Mucosa of descending colon (tissue), 3 donors: ENCODE measurements at regions of chr2 and their contacts with region 1.

Region 1: DNA sequence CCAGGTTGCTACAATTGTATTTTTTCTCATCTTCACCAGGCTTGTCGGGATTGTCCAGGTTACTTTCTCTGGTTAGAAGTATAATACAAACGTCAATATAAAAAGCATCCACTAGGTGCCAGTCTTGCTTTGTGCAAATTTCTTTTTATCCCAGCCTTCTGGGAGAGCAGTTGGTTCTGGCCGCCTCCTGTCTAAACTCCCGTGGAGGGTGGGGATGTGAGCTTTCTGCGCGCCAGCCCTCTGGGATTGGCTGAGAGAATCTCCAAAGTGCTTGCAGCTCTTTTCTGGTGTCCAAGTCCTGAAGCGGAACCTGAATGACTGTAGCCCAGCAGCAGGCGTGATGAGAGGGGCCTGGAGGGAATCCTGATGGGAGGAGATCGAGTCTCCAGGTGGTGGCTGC is 22.4 kb upstream of the TOGARAM2 start:
- DNase-seq: peak in 2 of 3 donors; percentile 39 to 69
- ATAC-seq: peak; percentile 88
- H3K4me3 ChIP-seq: no peak overlapping the region
- H3K4me1 ChIP-seq: peaks cover 9% of the 10 kb centered on the region
- CTCF ChIP-seq: peak; percentile 35

Region 2: DNA sequence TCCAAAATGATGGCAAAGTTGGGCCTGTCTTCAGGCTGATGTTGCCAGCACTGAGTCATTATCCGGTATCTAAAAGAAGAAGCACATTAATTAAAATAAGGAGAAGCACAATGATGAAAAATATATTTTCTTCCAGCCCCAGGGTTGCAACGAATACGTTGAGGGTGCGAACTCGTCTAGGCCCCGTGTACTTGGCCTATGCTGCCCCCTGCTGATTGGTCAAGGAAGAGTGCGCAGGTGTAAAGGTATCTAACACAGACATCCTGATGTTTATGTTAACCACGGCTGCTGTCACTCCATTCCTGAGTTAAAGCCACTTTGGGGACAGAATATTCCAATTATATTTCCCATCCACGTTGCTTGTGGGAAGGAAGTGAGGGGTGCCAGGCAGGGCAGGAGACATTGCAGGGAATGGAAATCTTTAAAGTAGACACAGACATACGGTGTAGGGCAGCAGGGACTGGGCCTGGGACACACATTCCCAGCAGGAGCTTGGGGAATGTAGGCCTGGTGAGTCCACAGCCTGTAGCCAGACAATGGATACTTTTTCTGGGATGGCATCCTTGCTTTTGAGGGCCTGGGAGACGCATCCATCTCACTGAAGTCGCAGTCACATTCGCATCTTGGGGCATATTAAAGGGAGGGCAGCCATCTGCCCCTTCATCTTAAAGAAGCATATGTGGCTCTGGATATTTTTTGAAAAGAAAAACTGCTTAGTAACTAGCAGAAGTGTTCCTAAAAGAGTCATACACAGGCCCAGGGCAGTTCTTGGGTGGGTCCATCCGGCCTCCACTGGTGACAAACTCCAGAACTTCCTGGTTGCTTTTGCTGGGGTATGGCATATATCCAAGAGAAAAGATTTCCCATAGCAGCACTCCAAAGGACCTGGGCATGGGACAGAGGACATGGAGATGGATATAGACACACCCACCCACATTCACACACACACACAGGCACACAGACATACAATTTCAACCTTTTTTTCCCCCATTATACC is 238.4 kb after region 1 on chr2:
- intact Hi-C with region 1: loop called (anchors 1 to 5 kb)
- DNase-seq: peak in 2 of 3 donors; percentile 74 to 83
- ATAC-seq: peak; percentile 89
- H3K4me3 ChIP-seq: no peak overlapping the region
- H3K4me1 ChIP-seq: no peaks in the 10 kb centered on the region
- CTCF ChIP-seq: peak; percentile 57

Region 3: GRCh38 chr2:29841386-29842004 is 882.8 kb after region 1 on chr2:
- intact Hi-C with region 1: loop called in 1 of 2 experiments (anchors 10 kb)
- DNase-seq: peak in 1 of 3 donors; percentile 14
- ATAC-seq: peak; percentile 38
- H3K4me3 ChIP-seq: no peak overlapping the region
- H3K4me1 ChIP-seq: no peaks in the 10 kb centered on the region
- CTCF ChIP-seq: peak; percentile 66